Heart left ventricle (tissue), 16 donors: ENCODE measurements at regions of chr5 and their contacts with region 1.

Region 1: GRCh38 chr5:109468737-109469420 is 59.1 kb upstream of the PJA2 start:
- DNase-seq: peak; percentile 95 to 98 (median 96)
- ATAC-seq: peak; percentile 87 to 99 (median 96)
- H3K4me3 ChIP-seq: no peak overlapping the region
- H3K27ac ChIP-seq: no peak overlapping the region
- H3K4me1 ChIP-seq: peaks cover 0 to 6% (median 2%) of the 10 kb centered on the region in 12 donors
- H3K27me3 ChIP-seq: no peaks in the 10 kb centered on the region
- CTCF ChIP-seq: peak; percentile 66 to 91 (median 80)
- POLR2A ChIP-seq: no peak

Region 2: DNA sequence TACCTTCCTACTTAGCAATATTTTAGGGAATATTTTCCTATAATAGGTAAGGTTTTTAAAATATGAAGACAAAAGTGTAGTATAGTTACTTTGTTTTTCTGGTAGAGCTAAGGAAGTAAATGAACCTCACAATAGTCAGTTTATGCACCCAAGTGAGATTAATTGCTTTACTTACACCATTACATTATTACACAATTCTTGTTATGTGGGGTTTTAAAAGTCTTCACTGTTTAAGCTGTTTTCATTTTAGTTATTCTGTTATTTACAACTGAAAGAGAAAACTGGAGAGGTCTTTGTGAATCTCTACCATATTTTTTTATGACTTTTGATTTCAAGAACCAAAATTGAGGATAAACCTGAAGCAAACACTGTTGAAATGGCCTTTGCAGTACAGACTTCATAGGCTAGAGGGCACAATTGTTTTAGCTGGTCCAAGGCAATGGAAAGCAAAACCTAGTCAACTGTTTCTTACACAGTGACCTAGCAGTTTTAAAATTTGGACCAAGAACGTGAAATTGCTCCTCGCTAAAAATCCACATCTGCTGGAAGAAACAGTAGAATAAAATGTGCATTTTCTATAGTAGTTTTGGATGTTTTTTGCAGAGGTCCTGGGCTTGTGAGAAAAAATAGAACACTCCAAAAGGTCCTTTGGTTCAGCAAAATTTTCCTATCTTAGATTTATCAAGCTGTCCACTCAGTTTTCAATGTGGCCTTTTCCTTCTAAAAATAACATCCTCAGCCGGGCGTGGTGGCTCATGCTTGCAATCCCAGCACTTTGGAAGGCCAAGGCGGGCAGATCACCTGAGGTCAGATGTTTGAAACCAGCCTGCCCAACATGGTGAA is 787.6 kb before region 1 on chr5:
- intact Hi-C with region 1: loop called in 3 of 10 experiments (anchors 5 to 10 kb)
- DNase-seq: peak in 2 of 5 donors; percentile 18 to 30
- ATAC-seq: peak; percentile 81 to 97 (median 86)
- H3K4me3 ChIP-seq: peak overlapping the region in 4 of 12 donors; percentile 7 to 34 (median 26)
- H3K27ac ChIP-seq: peak overlapping the region in 4 of 12 donors; percentile 20 to 61 (median 38)
- H3K4me1 ChIP-seq: peaks cover 0 to 5% (median 0%) of the 10 kb centered on the region in 12 donors
- H3K27me3 ChIP-seq: no peaks in the 10 kb centered on the region
- CTCF ChIP-seq: peak; percentile 62 to 89 (median 81)
- POLR2A ChIP-seq: no peak

Region 3: DNA sequence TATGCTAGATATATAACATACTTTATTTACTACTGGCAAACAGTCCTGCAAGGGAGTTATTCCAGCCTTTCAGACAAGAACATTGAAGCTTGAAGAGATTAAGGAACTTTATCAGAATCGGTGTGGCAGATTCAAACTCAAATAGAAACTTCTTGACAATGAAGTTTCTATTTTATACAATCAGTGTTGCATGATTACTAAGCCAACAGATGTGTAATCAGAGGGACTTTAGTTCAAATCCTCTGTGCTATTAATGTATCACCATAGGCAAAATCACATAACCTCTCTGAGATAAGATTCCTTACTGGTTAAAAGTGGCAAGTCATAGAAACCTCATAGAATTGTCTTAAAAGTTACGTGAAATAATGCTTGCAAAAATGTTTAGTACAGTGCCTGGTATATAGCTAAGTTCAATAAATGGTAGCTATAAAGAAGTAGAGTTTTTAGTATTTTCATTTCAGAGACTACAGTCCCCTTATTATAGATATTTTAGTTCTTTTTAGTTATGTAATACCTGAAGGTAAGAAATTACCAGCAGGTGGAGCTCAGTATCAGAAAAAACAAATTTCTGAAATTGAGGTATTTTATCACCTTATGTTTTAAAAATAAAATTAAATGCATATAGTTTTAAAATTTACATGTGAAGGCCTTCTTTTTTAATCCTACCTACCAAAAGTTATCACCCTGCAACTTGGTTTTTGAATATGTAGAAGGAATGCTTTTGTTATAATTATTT is 549.1 kb before region 1 on chr5:
- intact Hi-C with region 1: loop called in 1 of 10 experiments (anchors 10 kb)
- DNase-seq: no peak
- ATAC-seq: no peak
- H3K4me3 ChIP-seq: no peak overlapping the region
- H3K27ac ChIP-seq: no peak overlapping the region
- H3K4me1 ChIP-seq: peaks cover 0 to 4% (median 0%) of the 10 kb centered on the region in 12 donors
- H3K27me3 ChIP-seq: no peaks in the 10 kb centered on the region
- CTCF ChIP-seq: peak in 6 of 12 donors; percentile 23 to 45 (median 32)
- POLR2A ChIP-seq: no peak

Region 4: DNA sequence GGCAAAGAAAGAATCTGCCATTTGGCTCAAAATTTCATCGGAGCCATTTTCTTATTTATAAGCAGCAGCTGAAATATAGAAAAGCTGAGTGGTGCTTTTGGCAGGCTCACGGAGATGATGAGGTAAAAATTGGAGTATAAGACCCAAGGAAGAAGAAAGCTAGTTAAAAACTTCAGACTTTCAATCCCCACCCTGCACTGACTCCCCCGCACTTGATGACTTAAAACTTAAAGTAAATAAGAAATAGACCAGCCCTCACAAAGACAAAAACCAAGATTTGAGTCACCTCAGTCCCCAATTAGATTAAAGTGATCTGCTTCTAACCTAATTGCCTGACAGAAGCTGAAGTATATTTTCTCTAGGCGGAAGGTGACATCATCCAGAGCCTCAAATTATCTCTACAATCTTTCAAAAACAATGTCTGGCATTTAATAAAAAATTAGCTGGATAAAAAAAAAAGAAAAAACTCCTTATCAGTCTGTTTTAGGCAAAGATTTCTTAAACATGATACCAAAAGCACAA is 64.9 kb after region 1 on chr5:
- intact Hi-C with region 1: loop called in 1 of 10 experiments (anchors 2 kb)
- DNase-seq: no peak
- ATAC-seq: peak in 1 of 4 donors; percentile 49
- H3K4me3 ChIP-seq: no peak overlapping the region
- H3K27ac ChIP-seq: no peak overlapping the region
- H3K4me1 ChIP-seq: no peaks in the 10 kb centered on the region
- H3K27me3 ChIP-seq: no peaks in the 10 kb centered on the region
- CTCF ChIP-seq: no peak
- POLR2A ChIP-seq: no peak